AG04450 (cell line): ENCODE measurements at regions of chr10 and their contacts with region 1.

Region 1: DNA sequence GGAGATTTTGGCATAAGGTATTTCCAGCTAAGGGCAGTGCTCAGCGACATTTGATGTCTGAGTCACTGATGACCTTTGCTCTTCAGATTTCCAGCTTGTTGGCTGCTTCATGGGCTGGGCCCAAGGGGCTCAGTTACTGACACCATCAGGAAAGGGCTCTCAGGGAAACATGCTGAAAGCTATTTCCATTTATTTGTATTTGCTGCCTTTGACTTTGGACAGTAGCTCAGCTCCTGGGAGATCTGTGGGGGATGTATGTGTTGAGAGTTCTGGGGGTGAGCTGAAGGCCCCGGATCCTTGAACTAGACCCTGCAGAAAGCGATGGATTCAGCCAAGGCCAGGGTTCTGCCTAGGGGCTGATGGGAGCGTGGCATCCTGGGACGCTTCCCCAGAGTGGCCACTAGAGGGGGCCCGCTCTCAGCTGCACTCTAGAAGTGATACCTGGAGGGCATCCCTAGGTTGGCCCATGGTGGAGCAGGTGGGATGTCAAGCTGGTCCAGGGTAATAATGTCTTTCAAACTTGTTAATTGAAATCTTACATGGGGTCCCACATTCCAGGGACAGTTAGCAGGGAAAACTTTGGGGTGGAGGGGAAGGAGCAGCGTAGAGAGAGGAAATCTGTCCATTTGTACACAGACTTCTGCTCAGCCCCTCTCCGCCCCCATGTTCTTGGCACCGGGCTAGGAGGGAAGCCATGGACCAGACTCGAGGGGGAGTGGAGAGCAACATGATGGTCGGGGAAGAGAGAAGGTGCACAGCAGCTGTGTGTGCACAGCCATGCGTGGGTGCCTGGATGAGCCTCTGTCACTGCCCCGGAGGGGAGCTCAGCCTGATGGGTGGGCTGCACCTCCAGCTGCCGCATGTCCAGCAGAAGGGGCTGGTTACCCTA is 3.0 kb upstream of the BTBD16 start:
- DNase-seq: no peak
- H3K4me3 ChIP-seq: no peak overlapping the region
- H3K27ac ChIP-seq: no peak overlapping the region
- H3K27me3 ChIP-seq: no peaks in the 10 kb centered on the region
- CTCF ChIP-seq: peak; percentile 96

Region 2: DNA sequence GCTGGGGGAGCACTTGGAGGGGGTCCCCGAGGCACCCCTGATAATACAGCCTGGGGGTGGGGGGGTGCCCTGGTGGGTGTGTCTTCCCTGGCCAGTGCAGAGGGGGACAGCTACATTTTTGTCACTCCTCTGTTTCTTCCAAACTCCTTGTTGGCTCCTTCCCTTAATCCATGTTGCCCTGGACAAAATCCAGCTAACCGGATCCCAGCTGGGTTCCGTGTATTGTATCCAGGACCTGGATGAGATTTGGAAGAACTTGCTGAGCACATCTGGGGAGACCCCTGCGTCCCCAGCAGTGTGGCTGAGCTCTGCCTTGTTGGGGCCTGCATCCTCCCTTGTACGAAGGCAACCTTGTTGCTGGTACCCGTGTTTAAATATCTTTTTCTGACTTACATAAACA is 83.8 kb before region 1 on chr10:
- CTCF ChIA-PET with region 1: interaction called, 12 read pairs
- POLR2A ChIA-PET with region 1: no interaction called
- DNase-seq: no peak
- H3K4me3 ChIP-seq: no peak overlapping the region
- H3K27ac ChIP-seq: no peak overlapping the region
- H3K27me3 ChIP-seq: no peaks in the 10 kb centered on the region
- CTCF ChIP-seq: no peak

Region 3: DNA sequence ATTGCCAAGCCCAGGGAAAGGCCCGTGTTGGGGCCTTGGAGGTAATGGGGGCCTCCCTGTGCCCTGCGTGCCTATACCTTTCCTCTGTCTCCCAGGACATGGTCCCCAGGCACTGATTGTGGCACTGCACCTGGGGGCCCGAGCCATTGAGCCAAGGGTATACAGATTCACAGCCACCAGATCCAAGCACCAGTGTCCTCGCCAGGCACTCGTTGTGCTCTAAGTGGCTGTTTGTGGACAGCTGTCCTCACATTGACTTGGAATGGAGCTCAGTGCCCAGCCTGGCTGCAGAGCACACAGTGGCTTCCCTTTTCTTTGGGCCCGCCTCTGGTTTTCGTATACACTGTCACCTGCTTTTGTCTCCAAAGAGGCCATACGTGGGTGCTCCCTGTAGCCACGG is 69.0 kb before region 1 on chr10:
- CTCF ChIA-PET with region 1: no interaction called
- POLR2A ChIA-PET with region 1: no interaction called
- DNase-seq: no peak
- H3K4me3 ChIP-seq: no peak overlapping the region
- H3K27ac ChIP-seq: no peak overlapping the region
- H3K27me3 ChIP-seq: no peaks in the 10 kb centered on the region
- CTCF ChIP-seq: no peak

Region 4: GRCh38 chr10:122243550-122243949 is 24.5 kb before region 1 on chr10:
- CTCF ChIA-PET with region 1: interaction called, 10 read pairs
- POLR2A ChIA-PET with region 1: no interaction called
- DNase-seq: no peak
- H3K4me3 ChIP-seq: no peak overlapping the region
- H3K27ac ChIP-seq: no peak overlapping the region
- H3K27me3 ChIP-seq: no peaks in the 10 kb centered on the region
- CTCF ChIP-seq: no peak

Region 5: DNA sequence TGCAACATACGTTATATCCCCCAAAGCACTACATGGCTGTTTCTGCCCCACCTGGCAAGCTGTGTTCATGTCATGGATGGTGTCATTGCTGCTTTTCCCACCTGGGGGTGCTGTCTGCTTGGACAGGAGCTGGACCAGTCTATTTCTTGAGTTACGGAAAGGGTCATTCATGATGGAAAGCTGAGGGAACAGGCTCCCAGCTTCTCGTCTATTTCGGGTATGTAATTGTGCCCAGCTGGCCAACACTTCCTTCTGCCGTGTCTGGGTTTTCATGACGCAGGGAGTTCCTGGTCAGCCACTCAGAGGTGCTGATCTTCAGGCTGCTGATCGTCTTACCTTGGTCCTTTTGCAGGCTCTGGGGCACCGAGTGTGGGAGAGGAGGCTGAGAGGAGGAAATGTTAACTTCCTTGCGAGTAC is 11.6 kb after region 1 on chr10:
- CTCF ChIA-PET with region 1: interaction called, 24 read pairs
- POLR2A ChIA-PET with region 1: no interaction called
- DNase-seq: no peak
- H3K4me3 ChIP-seq: no peak overlapping the region
- H3K27ac ChIP-seq: no peak overlapping the region
- H3K27me3 ChIP-seq: no peaks in the 10 kb centered on the region
- CTCF ChIP-seq: peak; percentile 63

Region 6: GRCh38 chr10:122435212-122435827 is 167.2 kb after region 1 on chr10:
- CTCF ChIA-PET with region 1: interaction called, 31 read pairs
- POLR2A ChIA-PET with region 1: no interaction called
- DNase-seq: no peak
- H3K4me3 ChIP-seq: no peak overlapping the region
- H3K27ac ChIP-seq: no peak overlapping the region
- H3K27me3 ChIP-seq: no peaks in the 10 kb centered on the region
- CTCF ChIP-seq: peak; percentile 57

Region 7: DNA sequence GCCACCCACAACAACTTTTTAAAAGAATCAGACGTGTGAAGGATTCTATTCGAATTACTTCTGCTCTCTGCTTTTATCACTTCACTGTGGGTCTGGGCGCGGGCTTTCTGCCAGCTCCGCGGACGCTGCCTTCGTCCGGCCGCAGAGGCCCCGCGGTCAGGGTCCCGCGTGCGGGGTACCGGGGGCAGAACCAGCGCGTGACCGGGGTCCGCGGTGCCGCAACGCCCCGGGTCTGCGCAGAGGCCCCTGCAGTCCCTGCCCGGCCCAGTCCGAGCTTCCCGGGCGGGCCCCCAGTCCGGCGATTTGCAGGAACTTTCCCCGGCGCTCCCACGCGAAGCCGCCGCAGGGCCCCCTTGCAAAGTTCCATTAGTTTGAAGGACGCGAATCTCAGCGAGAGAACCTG is 192.8 kb after region 1 on chr10:
- CTCF ChIA-PET with region 1: no interaction called
- POLR2A ChIA-PET with region 1: no interaction called
- DNase-seq: no peak
- H3K4me3 ChIP-seq: peak overlapping the region; percentile 77
- H3K27ac ChIP-seq: no peak overlapping the region
- H3K27me3 ChIP-seq: no peaks in the 10 kb centered on the region
- CTCF ChIP-seq: no peak

Region 8: DNA sequence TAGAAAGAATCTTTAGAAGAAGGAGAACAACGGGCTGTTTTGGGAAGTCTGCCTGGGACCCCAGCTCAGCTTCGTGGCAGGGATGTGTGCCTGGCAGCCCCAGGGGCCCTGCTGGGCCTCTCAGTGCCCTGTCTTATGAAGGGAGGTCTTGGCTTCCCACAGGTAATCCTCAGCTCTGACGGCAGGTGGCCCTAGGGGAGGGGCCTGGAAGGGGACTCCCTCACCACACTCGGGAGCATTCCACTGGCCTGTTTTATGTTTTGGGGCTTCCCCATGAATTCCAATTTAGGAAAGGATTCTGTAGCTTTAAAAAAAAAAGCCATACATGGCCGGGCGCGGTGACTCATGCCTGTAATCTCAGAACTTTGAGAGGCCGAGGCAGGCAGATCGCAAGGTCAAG is 289.4 kb after region 1 on chr10:
- CTCF ChIA-PET with region 1: no interaction called
- POLR2A ChIA-PET with region 1: no interaction called
- DNase-seq: no peak
- H3K4me3 ChIP-seq: no peak overlapping the region
- H3K27ac ChIP-seq: no peak overlapping the region
- H3K27me3 ChIP-seq: peaks cover 27% of the 10 kb centered on the region
- CTCF ChIP-seq: no peak